A549 (cell line): ENCODE measurements at regions of chr2 and their contacts with region 1.

Region 1: GRCh38 chr2:174771631-174772471 is 7.6 kb upstream of the CHRNA1 start:
- DNase-seq: peak; percentile 70 to 87
- ATAC-seq: peak; percentile 99
- H3K4me3 ChIP-seq: no peak overlapping the region
- H3K27ac ChIP-seq: peak overlapping the region; percentile 41 to 77; a peak in 5 of 6 replicates
- H3K4me1 ChIP-seq: peaks cover 7% of the 10 kb centered on the region
- CTCF ChIP-seq: peak; percentile 93
- EP300 ChIP-seq: no peak
- POLR2A ChIP-seq: no peak
- RAD21 ChIP-seq: peak; percentile 96 to 97

Region 2: GRCh38 chr2:174350593-174351181 is 421.2 kb before region 1 on chr2:
- CTCF ChIA-PET with region 1: no interaction called
- POLR2A ChIA-PET with region 1: no interaction called
- DNase-seq: no peak
- ATAC-seq: no peak
- H3K4me3 ChIP-seq: no peak overlapping the region
- H3K27ac ChIP-seq: no peak overlapping the region
- H3K4me1 ChIP-seq: no peaks in the 10 kb centered on the region
- CTCF ChIP-seq: no peak
- EP300 ChIP-seq: no peak
- POLR2A ChIP-seq: no peak
- RAD21 ChIP-seq: no peak

Region 3: GRCh38 chr2:174487108-174487819 is 284.6 kb before region 1 on chr2:
- CTCF ChIA-PET with region 1: no interaction called
- POLR2A ChIA-PET with region 1: no interaction called
- DNase-seq: peak; percentile 80 to 98
- ATAC-seq: peak; percentile 95 to 97
- H3K4me3 ChIP-seq: peak overlapping the region; percentile 73
- H3K27ac ChIP-seq: peak overlapping the region; percentile 66 to 89
- H3K4me1 ChIP-seq: 0 out of 3 replicates have a peak, but pooled peaks cover 5% of the 10 kb centered on the region
- CTCF ChIP-seq: no peak
- EP300 ChIP-seq: no peak
- POLR2A ChIP-seq: peak; percentile 67
- RAD21 ChIP-seq: no peak

Region 4: DNA sequence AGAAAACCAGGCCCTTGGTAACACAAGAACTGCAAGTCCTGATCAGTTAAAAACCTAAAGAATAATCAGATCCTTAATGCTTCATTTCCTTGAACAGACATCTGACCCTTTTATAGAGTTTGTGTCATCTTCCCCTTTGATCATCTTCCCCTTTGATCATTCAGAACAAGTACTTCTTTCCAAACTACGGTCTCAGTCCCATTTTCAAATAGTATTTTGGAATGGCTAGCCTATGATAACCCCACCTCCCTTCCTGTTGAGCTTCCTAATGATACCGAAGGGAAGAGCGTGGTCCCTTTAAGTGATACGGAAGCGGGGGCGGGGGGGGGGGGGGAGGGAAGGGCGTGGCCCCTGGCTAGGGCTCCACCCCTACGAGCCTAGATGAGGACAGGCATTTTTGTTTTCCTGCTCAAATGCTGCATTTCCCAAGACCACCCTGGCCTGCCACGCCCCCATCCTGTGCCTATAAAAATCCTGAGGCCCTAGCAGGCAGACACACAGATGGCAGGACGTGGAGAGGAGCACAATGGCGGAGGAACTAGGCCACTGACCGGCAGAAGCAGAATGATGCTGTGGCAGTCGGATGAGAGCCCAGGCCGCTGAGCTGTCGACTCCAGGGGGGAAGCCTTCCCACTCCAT is 16.6 kb after region 1 on chr2:
- CTCF ChIA-PET with region 1: interaction called, 26 read pairs
- POLR2A ChIA-PET with region 1: no interaction called
- DNase-seq: peak in 1 of 2 experiments; percentile 40
- ATAC-seq: peak; percentile 64 to 74; a peak in 3 of 6 replicates
- H3K4me3 ChIP-seq: no peak overlapping the region
- H3K27ac ChIP-seq: peak overlapping the region in 1 of 2 experiments; percentile 50; a peak in 3 of 6 replicates
- H3K4me1 ChIP-seq: peaks cover 9% of the 10 kb centered on the region; the same call in 1 of the 3 replicates
- CTCF ChIP-seq: no peak
- EP300 ChIP-seq: no peak
- POLR2A ChIP-seq: no peak
- RAD21 ChIP-seq: no peak

Region 5: DNA sequence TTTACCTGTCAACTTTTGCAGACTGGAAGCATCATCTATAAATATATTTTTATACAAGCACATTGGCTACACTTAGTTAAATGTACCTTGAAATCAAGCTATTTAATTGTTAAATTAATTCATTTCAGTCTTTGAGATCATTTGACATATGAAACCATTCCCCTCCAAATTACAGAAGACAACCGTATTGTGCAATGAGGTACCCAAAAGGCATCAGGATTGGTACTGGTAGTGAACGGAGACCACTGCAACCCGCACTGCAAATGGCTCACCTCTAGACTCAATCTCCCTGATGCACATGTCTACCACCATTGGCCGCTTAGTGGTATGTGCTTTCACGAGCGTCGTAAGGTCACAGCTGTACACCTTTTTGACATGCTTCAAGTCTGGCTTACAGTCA is 40.2 kb after region 1 on chr2:
- CTCF ChIA-PET with region 1: interaction called, 11 read pairs
- POLR2A ChIA-PET with region 1: no interaction called
- DNase-seq: no peak
- ATAC-seq: no peak
- H3K4me3 ChIP-seq: no peak overlapping the region
- H3K27ac ChIP-seq: no peak overlapping the region
- H3K4me1 ChIP-seq: peaks cover 4% of the 10 kb centered on the region; the same call in 1 of the 3 replicates
- CTCF ChIP-seq: no peak
- EP300 ChIP-seq: no peak
- POLR2A ChIP-seq: no peak
- RAD21 ChIP-seq: no peak

Region 6: GRCh38 chr2:174985630-174986029 is 213.8 kb after region 1 on chr2:
- CTCF ChIA-PET with region 1: interaction called, 274 read pairs
- POLR2A ChIA-PET with region 1: interaction called, 3 read pairs
- DNase-seq: no peak
- ATAC-seq: peak in 1 of 2 experiments; percentile 38; a peak in 1 of 6 replicates
- H3K4me3 ChIP-seq: no peak overlapping the region
- H3K27ac ChIP-seq: no peak overlapping the region
- H3K4me1 ChIP-seq: peaks cover 7% of the 10 kb centered on the region; the same call in 2 of the 3 replicates
- CTCF ChIP-seq: peak; percentile 89
- EP300 ChIP-seq: no peak
- POLR2A ChIP-seq: no peak
- RAD21 ChIP-seq: peak; percentile 86 to 87

Region 7: DNA sequence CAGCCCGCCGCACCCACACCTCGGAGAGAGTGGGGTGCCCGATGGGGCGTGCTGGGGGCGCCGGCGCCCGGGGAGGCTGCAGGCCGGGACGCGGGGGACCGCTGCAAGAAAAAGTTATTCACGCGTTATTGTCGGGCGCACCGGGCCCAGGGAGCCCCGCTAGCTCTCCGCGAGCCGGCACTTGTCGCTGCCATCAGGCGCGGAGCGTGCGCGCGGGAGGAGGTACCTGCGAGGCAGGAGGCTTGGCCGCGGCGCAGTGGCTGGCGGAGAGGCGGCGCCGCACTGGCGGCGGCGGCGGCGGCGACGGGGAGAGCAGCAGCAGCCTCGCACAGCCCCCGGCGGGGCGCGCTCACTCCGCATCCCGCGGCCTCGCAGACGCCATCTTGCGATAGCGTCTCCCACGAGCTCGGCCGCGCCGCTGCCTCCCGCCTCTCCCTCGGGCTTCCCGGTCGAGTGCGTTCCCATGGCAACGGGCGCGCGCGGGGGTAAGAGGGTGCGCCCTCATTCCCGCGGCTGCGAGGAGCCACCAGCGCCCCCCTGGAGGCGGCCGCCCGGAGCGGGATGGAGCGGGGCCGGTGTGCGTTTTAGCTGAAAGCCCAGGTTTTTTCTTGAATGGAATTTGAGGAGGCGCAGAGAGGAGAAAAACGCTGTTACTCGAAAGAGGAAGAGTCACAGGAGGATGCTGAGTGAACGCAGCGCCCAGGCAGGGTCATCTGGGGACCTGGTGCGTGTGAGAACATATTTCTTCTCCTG is 233.3 kb after region 1 on chr2 and contains the start of gene CHN1:
- CTCF ChIA-PET with region 1: interaction called, 45 read pairs
- POLR2A ChIA-PET with region 1: interaction called, 3 read pairs
- DNase-seq: peak; percentile 70 to 87
- ATAC-seq: peak; percentile 90 to 93
- H3K4me3 ChIP-seq: peak within 1 kb of the TSS; percentile 73
- H3K27ac ChIP-seq: peak within 1 kb of the TSS; percentile 85 to 98
- H3K4me1 ChIP-seq: peaks cover 13% of the 10 kb centered on the region; the same call in 2 of the 3 replicates
- CTCF ChIP-seq: peak; percentile 52; the same call in 2 of the 3 replicates
- EP300 ChIP-seq: no peak
- POLR2A ChIP-seq: peak; percentile 75
- RAD21 ChIP-seq: peak in 1 of 2 experiments; percentile 6; a peak in 1 of 5 replicates
- polyA plus RNA-seq, gene CHN1: 46.6 and 49.4 TPM in 2 replicates

Region 8: DNA sequence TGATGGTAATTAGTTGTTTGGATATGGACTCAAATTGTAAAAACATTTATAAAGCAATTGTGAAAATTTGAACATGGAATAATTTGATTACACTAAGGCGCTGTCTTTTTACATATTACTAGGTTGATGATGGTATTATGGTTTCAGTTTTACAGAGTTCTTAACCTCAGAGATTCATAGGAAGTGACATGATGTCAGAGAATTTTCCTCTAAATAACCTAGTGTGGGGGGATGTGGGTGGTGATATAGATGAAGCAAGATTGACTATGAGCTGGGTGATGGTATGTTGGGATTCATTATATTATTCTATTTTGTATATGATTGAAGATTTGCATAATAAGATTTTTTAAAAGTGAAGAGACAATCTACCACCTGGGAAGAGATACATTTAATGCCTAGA is 455.5 kb after region 1 on chr2:
- CTCF ChIA-PET with region 1: no interaction called
- POLR2A ChIA-PET with region 1: no interaction called
- DNase-seq: no peak
- ATAC-seq: no peak
- H3K4me3 ChIP-seq: no peak overlapping the region
- H3K27ac ChIP-seq: no peak overlapping the region
- H3K4me1 ChIP-seq: no peaks in the 10 kb centered on the region
- CTCF ChIP-seq: no peak
- EP300 ChIP-seq: no peak
- POLR2A ChIP-seq: no peak
- RAD21 ChIP-seq: no peak

Region 9: GRCh38 chr2:175579646-175580045 is 807.8 kb after region 1 on chr2:
- CTCF ChIA-PET with region 1: no interaction called
- POLR2A ChIA-PET with region 1: no interaction called
- DNase-seq: no peak
- ATAC-seq: no peak
- H3K4me3 ChIP-seq: no peak overlapping the region
- H3K27ac ChIP-seq: no peak overlapping the region
- H3K4me1 ChIP-seq: no peaks in the 10 kb centered on the region
- CTCF ChIP-seq: no peak
- EP300 ChIP-seq: no peak
- POLR2A ChIP-seq: no peak
- RAD21 ChIP-seq: no peak